B cell (primary cell): ENCODE measurements at regions of chr17 and their contacts with region 1.

Region 1: DNA sequence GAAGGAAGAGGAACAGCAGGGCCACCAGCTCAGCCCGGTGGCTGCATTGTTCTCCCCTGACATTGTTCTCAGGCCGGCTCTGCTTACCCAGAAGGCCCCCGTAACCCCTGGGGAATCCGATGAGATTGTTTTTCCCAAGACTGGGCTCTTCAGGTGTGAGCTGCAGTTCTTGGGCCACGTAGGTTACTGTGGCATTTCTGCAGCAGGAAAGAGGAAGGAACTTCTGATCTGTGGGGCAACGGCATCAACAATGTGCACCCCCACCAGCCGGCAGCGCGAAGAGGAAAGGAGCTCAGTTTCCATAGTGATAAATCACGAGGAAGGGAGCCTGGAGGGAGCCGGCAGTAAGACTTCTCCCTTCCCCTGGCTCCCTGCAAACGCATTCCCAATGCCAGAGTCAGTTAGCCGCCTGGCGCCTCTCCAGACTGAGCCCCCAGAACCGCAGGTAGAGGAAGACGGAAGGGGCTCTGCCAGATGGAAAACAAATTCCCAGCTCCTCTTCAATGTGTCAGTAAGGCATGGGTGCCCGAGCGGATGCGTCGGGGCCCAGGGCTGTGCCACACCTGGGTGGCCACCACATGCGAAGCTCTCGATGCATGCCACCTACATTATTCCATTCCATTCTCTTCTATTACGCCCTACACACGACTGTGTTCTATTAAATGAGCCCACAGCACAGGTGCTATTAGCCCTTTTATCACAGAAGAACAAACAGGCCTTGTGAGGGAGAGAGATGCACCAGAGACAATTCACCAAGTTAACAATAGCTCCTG is 21.5 kb upstream of the PECAM1 start:
- DNase-seq: peak; percentile 79
- ATAC-seq: peak; percentile 76
- H3K4me3 ChIP-seq: peak overlapping the region; percentile 47 to 71 (median 60)
- H3K4me3 Mint-ChIP-seq: peak overlapping the region; percentile 92
- H3K27ac ChIP-seq: peak overlapping the region; percentile 83 to 89
- H3K27ac Mint-ChIP-seq: peak overlapping the region; percentile 96
- H3K4me1 ChIP-seq: peaks cover 42 to 54% of the 10 kb centered on the region in 2 donors
- H3K4me1 Mint-ChIP-seq: peaks cover 50% of the 10 kb centered on the region
- H3K27me3 ChIP-seq: no peaks in the 10 kb centered on the region
- H3K27me3 Mint-ChIP-seq: no peaks in the 10 kb centered on the region
- CTCF ChIP-seq: no peak

Region 2: DNA sequence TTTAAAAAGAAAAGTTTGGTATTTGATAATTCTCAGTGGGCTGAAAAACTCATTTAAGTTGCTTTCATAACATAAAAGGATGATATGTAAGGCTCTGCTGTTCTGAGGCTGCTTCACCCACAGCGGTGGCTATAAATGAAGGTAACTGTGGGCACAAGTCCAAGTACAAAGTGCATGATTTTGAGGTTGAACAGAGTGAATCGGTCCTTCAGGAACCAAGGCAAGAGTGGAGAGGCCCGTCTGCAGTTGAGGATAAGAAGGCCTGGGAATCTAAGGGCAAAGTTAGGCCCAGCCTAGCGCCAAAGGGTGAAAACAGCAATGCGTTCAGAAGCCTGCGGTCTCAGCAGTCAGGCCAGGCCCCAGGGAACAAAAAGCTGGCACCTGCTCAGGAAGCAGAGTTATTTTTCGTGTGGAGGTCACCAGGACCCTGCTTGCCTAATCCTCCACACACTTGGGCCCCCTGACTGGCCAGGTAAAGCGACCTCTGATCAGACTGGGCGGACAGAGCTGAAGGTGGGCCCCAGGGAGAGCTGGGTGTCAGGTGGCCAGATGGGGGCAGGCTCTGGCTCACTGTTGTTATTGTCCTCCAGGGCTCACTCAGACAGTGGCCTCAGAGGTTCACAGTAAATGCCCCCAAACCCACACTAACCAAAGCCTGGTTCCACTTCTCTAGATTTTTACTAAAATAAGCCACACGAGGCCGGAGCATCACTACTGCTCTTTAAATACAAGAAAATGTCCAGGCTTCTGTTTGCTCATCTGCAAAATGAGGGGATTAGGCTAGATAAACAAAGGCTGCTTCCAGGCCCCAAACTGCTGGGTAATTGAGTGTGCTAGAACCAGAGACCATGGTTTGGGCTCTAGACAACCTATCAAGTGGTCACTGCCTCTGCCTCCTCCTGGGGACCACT is 195.6 kb before region 1 on chr17:
- CTCF ChIA-PET with region 1: no interaction called
- POLR2A ChIA-PET with region 1: no interaction called
- intact Hi-C with region 1: no loop called
- DNase-seq: peak; percentile 60
- ATAC-seq: peak; percentile 77
- H3K4me3 ChIP-seq: no peak overlapping the region
- H3K4me3 Mint-ChIP-seq: peak overlapping the region; percentile 46
- H3K27ac ChIP-seq: peak overlapping the region; percentile 60 to 84
- H3K27ac Mint-ChIP-seq: peak overlapping the region; percentile 85
- H3K4me1 ChIP-seq: peaks cover 27 to 31% of the 10 kb centered on the region in 2 donors
- H3K4me1 Mint-ChIP-seq: peaks cover 34% of the 10 kb centered on the region
- H3K27me3 ChIP-seq: no peaks in the 10 kb centered on the region
- H3K27me3 Mint-ChIP-seq: no peaks in the 10 kb centered on the region
- CTCF ChIP-seq: no peak

Region 3: DNA sequence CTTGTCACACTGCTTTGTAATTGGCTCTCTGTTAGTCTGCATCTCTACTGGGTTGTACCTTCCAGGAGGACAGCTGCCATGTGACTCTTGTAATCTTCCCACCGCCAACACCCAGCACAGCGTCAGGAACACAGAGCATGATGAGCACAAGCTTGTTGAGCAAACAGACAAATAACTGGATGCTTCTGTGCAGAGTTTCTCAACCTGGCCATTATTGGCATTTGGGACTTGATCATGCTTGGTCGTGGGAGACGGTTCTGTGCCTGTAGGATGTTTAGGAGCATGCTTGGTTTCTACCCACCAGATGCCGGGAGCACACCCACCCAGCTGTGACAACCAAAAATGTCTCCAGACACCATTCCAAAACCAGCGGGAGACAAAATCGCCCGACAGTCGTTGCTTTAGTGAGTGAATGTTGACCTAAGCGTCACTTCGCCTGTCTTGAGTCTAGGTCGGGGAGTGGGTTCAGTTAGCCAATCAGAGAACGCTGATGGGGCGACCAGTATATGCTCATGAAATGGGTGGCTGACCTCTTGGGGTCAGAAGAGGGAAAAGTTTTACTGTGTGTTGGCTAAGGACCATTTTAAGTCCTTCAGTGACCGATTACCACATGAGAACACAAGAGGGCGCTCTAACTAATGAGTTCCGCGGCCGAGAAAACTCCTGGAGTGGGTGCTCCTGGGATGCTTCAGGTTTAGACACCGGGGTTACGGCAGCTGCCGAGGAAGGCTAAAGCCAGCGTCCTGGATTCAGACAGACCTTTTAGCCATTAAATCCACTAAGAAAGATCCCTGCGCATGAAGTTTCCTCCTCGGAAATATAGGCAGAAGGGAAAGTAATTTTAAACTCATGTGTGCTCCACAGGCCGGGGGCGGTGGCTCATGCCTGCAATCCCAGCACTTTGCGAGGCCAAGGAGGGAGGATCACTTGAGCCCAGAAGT is 91.3 kb before region 1 on chr17:
- CTCF ChIA-PET with region 1: interaction called, 316 read pairs
- POLR2A ChIA-PET with region 1: interaction called, 3 read pairs
- intact Hi-C with region 1: loop called (anchors 1 kb)
- DNase-seq: peak; percentile 74
- ATAC-seq: peak; percentile 13
- H3K4me3 ChIP-seq: no peak overlapping the region
- H3K4me3 Mint-ChIP-seq: peak overlapping the region; percentile 56
- H3K27ac ChIP-seq: no peak overlapping the region
- H3K27ac Mint-ChIP-seq: peak overlapping the region; percentile 5
- H3K4me1 ChIP-seq: peaks cover 26 to 42% of the 10 kb centered on the region in 2 donors
- H3K4me1 Mint-ChIP-seq: peaks cover 54% of the 10 kb centered on the region
- H3K27me3 ChIP-seq: no peaks in the 10 kb centered on the region
- H3K27me3 Mint-ChIP-seq: peaks cover 3% of the 10 kb centered on the region
- CTCF ChIP-seq: peak; percentile 95

Region 4: GRCh38 chr17:64326395-64327054 is 85.7 kb before region 1 on chr17:
- CTCF ChIA-PET with region 1: interaction called, 316 read pairs
- POLR2A ChIA-PET with region 1: interaction called, 3 read pairs
- intact Hi-C with region 1: loop called (anchors 1 kb)
- DNase-seq: peak; percentile 37
- ATAC-seq: peak; percentile 76
- H3K4me3 ChIP-seq: no peak overlapping the region
- H3K4me3 Mint-ChIP-seq: peak overlapping the region; percentile 66
- H3K27ac ChIP-seq: no peak overlapping the region
- H3K27ac Mint-ChIP-seq: peak overlapping the region; percentile 76
- H3K4me1 ChIP-seq: peaks cover 45 to 50% of the 10 kb centered on the region in 2 donors
- H3K4me1 Mint-ChIP-seq: peaks cover 51% of the 10 kb centered on the region
- H3K27me3 ChIP-seq: no peaks in the 10 kb centered on the region
- H3K27me3 Mint-ChIP-seq: no peaks in the 10 kb centered on the region
- CTCF ChIP-seq: no peak

Region 5: GRCh38 chr17:64393000-64393402 is 19.2 kb before region 1 on chr17:
- CTCF ChIA-PET with region 1: interaction called, 94 read pairs
- POLR2A ChIA-PET with region 1: interaction called, 5 read pairs
- intact Hi-C with region 1: loop called (anchors 2 kb)
- DNase-seq: no peak
- ATAC-seq: no peak
- H3K4me3 ChIP-seq: no peak overlapping the region
- H3K4me3 Mint-ChIP-seq: no peak overlapping the region
- H3K27ac ChIP-seq: peak overlapping the region in 1 of 2 donors; percentile 48
- H3K27ac Mint-ChIP-seq: peak overlapping the region; percentile 10
- H3K4me1 ChIP-seq: peaks cover 39 to 45% of the 10 kb centered on the region in 2 donors
- H3K4me1 Mint-ChIP-seq: peaks cover 40% of the 10 kb centered on the region
- H3K27me3 ChIP-seq: no peaks in the 10 kb centered on the region
- H3K27me3 Mint-ChIP-seq: no peaks in the 10 kb centered on the region
- CTCF ChIP-seq: no peak

Region 6: DNA sequence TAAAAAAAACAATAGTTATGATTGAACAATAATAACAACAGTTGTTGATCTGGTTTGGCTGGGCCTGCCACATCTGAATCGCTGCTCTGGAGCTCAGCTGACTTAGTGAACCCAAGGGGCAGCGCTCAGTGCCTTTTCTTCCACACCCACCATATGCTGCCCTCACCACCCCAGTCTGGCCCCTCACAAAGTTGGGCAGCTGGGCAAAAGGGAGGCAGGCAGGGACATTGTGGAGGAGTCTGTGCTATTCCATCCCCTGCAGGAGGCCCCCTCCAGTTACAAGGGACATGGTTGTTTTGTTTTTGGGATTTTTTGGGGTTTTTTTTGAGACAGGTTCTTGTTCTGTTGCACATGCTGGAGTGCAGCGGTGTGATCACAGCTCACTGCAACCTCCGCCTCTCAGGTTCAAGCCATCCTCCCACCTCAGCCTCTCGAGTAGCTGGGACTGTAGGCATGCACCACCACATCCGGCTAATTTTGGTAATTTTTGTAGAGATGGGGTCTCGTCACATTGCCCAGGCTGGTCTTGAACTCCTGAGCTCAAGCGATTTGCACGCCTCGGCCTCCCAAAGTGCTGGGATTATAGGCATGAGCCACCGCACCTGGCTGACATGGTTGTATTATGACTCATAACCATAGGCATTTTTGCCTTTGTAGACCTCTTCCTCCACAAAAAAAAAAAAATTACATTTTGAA is 13.0 kb before region 1 on chr17:
- CTCF ChIA-PET with region 1: interaction called, 94 read pairs
- POLR2A ChIA-PET with region 1: interaction called, 10 read pairs
- intact Hi-C with region 1: loop called (anchors 1 kb)
- DNase-seq: no peak
- ATAC-seq: no peak
- H3K4me3 ChIP-seq: no peak overlapping the region
- H3K4me3 Mint-ChIP-seq: no peak overlapping the region
- H3K27ac ChIP-seq: no peak overlapping the region
- H3K27ac Mint-ChIP-seq: peak overlapping the region; percentile 15
- H3K4me1 ChIP-seq: peaks cover 69 to 73% of the 10 kb centered on the region in 2 donors
- H3K4me1 Mint-ChIP-seq: peaks cover 64% of the 10 kb centered on the region
- H3K27me3 ChIP-seq: no peaks in the 10 kb centered on the region
- H3K27me3 Mint-ChIP-seq: no peaks in the 10 kb centered on the region
- CTCF ChIP-seq: no peak

Region 7: GRCh38 chr17:64622931-64623654 is 210.9 kb after region 1 on chr17:
- CTCF ChIA-PET with region 1: no interaction called
- POLR2A ChIA-PET with region 1: no interaction called
- intact Hi-C with region 1: no loop called
- DNase-seq: no peak
- ATAC-seq: no peak
- H3K4me3 ChIP-seq: no peak overlapping the region
- H3K4me3 Mint-ChIP-seq: no peak overlapping the region
- H3K27ac ChIP-seq: no peak overlapping the region
- H3K27ac Mint-ChIP-seq: no peak overlapping the region
- H3K4me1 ChIP-seq: no peaks in the 10 kb centered on the region
- H3K4me1 Mint-ChIP-seq: peaks cover 25% of the 10 kb centered on the region
- H3K27me3 ChIP-seq: no peaks in the 10 kb centered on the region
- H3K27me3 Mint-ChIP-seq: no peaks in the 10 kb centered on the region
- CTCF ChIP-seq: no peak